ENCODE measurements at regions of chr4 and their contacts with region 1.

Region 1: DNA sequence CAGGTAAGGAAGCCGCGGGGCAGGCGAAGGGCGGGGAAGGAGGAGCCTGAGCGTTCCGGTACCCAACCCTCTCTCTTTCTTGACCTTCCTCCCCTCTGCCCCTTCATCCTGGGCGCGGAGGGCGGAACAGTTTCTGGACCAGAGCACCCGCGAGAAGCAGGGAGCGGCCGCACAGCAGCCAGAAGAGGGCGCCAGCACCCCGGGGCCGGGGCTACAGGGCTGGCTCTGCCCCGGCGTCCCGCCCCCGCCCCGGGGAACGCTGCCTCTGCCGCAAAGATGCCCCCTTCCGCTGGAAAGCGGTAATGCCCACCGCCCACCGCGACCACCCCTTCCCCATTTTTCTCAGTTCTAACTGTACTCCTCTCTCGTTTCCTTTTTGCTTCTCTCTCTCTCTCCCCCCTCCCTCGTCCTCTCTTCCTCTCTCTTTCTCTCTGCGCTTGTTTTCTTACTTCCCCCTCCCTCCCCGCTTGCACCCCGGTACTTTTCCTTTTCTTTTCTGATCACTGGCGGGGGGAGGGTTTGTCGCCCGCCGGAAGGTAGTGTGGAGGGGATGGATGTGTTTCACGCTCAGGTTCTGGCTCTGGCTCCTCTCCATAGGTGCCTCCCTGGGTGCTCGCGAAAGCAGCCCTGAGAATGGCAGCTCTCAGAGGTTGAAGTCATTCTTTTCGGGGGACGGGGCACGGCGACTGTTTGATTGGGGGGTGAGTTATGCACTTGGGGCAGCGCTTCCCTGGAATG is 13.1 kb upstream of the PRDM8 start:
- DNase-seq: peak; percentile 78 to 96 (median 90)
- ATAC-seq: peak; percentile 83 to 86
- H3K4me3 Mint-ChIP-seq: peak overlapping the region; percentile 94 to 100 (median 98)
- H3K27ac Mint-ChIP-seq: peak overlapping the region; percentile 81 to 98 (median 96)
- H3K4me1 Mint-ChIP-seq: peaks cover 31 to 60% (median 54%) of the 10 kb centered on the region in 4 donors
- H3K27me3 Mint-ChIP-seq: peaks cover 0 to 10% (median 3%) of the 10 kb centered on the region in 5 donors

Region 2: GRCh38 chr4:80072744-80073472 is 111.3 kb before region 1 on chr4 and contains the start of gene ANTXR2:
- POLR2A ChIA-PET with region 1: interaction called, 19 read pairs
- DNase-seq: peak; percentile 41 to 71 (median 48)
- ATAC-seq: peak; percentile 73 to 77
- H3K4me3 Mint-ChIP-seq: peak within 1 kb of the TSS; percentile 88 to 99 (median 97)
- H3K27ac Mint-ChIP-seq: peak within 1 kb of the TSS; percentile 87 to 99 (median 97)
- H3K4me1 Mint-ChIP-seq: peaks cover 18 to 74% (median 45%) of the 10 kb centered on the region in 4 donors
- H3K27me3 Mint-ChIP-seq: no peaks in the 10 kb centered on the region
- polyA plus RNA-seq, gene ANTXR2: 11.4 to 22.1 (median 11.5) TPM

Region 3: DNA sequence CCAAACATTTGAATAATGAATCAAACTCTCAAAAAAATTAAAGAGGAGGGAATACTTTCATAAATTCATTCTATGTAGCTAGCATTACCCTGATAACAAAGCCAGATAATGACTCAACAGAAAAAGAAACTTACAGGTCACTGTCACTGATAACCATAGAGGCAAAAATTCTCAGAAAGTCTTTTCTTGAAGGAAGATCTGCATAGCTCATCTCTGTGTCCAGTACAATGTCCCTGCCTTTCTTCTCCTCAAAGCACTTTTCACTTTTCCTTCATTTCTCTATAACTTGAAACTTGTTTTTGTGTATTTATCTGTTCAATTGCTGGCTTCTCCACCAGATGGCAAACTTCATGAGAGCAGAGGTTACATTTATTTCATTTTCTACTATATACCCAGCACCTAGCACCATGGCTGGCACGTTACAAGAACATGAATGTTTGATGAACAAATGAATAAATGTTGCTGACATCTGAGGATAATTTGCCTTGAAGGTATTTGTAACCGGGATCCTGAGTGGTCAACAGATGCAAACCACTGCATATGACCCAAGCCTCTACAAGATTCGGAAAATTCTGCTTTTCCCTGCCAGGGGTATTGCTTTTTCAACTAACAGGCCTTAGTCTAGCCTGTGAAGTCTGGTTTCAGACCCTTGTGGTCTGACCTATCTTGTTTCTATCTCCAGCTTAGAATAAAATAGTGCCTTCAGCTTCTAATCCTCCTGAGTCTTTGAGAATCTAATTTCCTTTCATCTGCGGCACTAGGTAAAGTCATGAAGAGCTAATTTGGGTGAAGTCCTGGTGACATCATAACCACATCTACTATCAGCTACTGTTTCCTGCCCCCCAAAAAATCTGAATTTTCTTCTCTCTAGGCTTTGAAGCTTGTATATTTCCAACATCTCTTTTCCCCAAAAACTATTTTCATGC is 58.7 kb before region 1 on chr4:
- POLR2A ChIA-PET with region 1: interaction called, 39 read pairs
- DNase-seq: peak in 9 of 10 donors; percentile 3 to 73 (median 48)
- ATAC-seq: peak; percentile 90 to 93
- H3K4me3 Mint-ChIP-seq: peak overlapping the region; percentile 9 to 59 (median 49)
- H3K27ac Mint-ChIP-seq: peak overlapping the region; percentile 74 to 96 (median 91)
- H3K4me1 Mint-ChIP-seq: peaks cover 19 to 54% (median 45%) of the 10 kb centered on the region in 4 donors
- H3K27me3 Mint-ChIP-seq: no peaks in the 10 kb centered on the region

Region 4: GRCh38 chr4:80138551-80139538 is 45.4 kb before region 1 on chr4:
- POLR2A ChIA-PET with region 1: interaction called, 14 read pairs
- DNase-seq: peak in 9 of 10 donors; percentile 12 to 75 (median 51)
- ATAC-seq: peak; percentile 99 to 100
- H3K4me3 Mint-ChIP-seq: peak overlapping the region in 2 of 10 donors; percentile 50 to 61
- H3K27ac Mint-ChIP-seq: peak overlapping the region; percentile 0 to 93 (median 76)
- H3K4me1 Mint-ChIP-seq: peaks cover 19 to 53% (median 42%) of the 10 kb centered on the region in 4 donors
- H3K27me3 Mint-ChIP-seq: peaks cover 0 to 2% (median 0%) of the 10 kb centered on the region in 5 donors

Region 5: DNA sequence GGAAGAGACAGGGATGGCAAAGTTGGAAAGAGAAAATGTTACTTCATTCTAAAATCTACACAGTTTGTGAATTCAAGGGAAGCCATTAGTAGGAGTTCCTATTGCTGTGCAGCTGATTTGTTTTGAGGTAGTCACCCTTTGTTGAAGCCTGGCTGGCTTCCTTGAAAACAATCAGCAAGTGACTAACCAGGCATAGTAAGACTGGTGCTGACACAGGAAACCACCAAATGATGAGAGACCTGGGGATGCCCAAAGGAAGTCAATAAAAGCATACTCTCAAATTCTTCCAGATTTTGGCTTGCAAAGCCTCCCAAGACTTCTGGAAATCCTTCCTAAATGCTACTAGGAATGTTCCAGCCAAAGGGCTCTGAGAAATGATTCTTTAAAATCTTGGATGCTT is 10.8 kb before region 1 on chr4:
- POLR2A ChIA-PET with region 1: interaction called, 58 read pairs
- DNase-seq: peak in 8 of 10 donors; percentile 44 to 75 (median 56)
- ATAC-seq: peak; percentile 98 to 100
- H3K4me3 Mint-ChIP-seq: peak overlapping the region; percentile 21 to 81 (median 74)
- H3K27ac Mint-ChIP-seq: peak overlapping the region; percentile 90 to 99 (median 94)
- H3K4me1 Mint-ChIP-seq: peaks cover 20 to 56% (median 48%) of the 10 kb centered on the region in 4 donors
- H3K27me3 Mint-ChIP-seq: no peaks in the 10 kb centered on the region

Region 6: DNA sequence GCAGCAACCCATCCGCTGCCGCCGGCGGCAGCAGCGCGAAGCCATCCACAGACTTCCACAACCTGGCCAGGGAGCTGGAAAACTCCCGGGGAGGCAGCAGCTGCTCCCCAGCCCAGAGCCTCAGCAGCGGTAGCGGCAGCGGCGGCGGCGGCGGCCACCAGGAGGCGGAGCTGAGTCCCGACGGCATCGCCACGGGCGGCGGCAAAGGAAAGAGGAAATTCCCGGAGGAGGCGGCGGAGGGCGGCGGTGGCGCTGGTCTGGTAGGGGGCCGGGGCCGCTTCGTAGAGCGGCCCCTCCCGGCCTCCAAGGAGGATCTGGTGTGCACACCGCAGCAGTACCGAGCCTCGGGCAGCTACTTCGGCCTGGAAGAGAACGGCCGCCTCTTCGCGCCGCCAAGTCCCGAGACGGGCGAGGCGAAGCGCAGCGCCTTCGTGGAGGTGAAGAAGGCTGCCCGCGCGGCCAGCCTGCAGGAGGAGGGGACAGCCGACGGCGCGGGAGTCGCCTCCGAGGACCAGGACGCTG is 18.0 kb after region 1 on chr4:
- POLR2A ChIA-PET with region 1: interaction called, 32 read pairs
- DNase-seq: peak; percentile 62 to 82 (median 73)
- ATAC-seq: peak; percentile 63 to 64
- H3K4me3 Mint-ChIP-seq: peak overlapping the region; percentile 70 to 90 (median 82)
- H3K27ac Mint-ChIP-seq: peak overlapping the region in 8 of 10 donors; percentile 25 to 85 (median 77)
- H3K4me1 Mint-ChIP-seq: peaks cover 18 to 29% (median 23%) of the 10 kb centered on the region in 4 donors
- H3K27me3 Mint-ChIP-seq: peaks cover 9 to 15% (median 11%) of the 10 kb centered on the region in 5 donors